Activated naive CD4-positive, alpha-beta T cell treated with anti-CD3 and anti-CD28 coated beads, Interleukin-2, amount 10 ng/mL, durations not matched to agents 7 days and 5 days (primary cell): ENCODE measurements at regions of chr9 and their contacts with region 1.

Region 1: DNA sequence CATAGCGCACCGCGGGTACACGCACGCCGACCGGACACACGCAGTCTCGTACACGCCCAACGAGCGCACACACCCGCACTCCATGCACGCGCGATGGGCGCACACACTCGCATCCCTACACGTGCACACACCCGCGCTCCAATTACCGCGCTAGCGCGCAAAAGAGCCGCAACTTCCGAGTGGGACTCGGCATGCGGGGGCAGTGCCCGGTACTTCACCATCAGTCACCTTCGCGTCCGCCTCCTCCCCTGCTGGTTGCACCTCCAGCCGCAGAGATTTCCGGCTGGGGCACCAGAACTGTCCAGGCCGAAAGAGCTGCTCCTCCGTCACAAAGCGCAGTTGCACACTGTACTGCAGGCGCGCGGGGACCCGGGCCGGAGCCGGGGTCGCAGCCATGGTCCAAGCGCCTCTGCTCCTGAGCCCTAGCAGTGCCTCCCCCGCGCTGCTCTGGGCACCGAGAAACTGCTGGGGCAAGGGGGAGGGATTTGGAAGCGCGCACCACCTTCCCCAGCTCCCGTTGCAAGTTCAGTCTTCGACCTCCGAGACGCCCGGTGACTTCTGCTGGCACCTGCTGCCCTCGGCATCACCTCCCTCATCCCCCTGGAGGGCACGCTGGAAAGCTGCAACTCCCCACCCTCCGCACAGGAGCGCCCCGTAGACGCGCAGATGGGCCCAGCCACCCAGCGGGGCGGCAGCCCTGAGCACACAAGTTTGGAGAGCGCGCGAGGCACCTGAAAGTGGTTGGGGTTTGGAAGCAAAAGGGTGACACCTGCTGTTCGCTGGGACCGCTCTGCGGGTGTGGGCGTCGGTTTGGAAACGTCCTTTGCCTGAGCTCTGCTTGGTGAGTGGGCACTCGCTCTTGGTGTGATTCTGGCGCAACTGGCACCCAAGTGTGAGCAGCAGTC is 337.4 kb upstream of the PUM3 start:
- DNase-seq: peak; percentile 62
- H3K4me3 Mint-ChIP-seq: peak overlapping the region; percentile 56
- H3K27ac Mint-ChIP-seq: no peak overlapping the region
- H3K4me1 Mint-ChIP-seq: peaks cover 2% of the 10 kb centered on the region
- H3K27me3 Mint-ChIP-seq: peaks cover 39% of the 10 kb centered on the region

Region 2: GRCh38 chr9:2857564-2858198 is 323.6 kb before region 1 on chr9:
- CTCF ChIA-PET with region 1: interaction called, 32 read pairs
- DNase-seq: peak; percentile 79
- H3K4me3 Mint-ChIP-seq: no peak overlapping the region
- H3K27ac Mint-ChIP-seq: no peak overlapping the region
- H3K4me1 Mint-ChIP-seq: no peaks in the 10 kb centered on the region
- H3K27me3 Mint-ChIP-seq: peaks cover 24% of the 10 kb centered on the region

Region 3: GRCh38 chr9:3367185-3367584 is 185.9 kb after region 1 on chr9:
- CTCF ChIA-PET with region 1: no interaction called
- DNase-seq: no peak
- H3K4me3 Mint-ChIP-seq: no peak overlapping the region
- H3K27ac Mint-ChIP-seq: no peak overlapping the region
- H3K4me1 Mint-ChIP-seq: no peaks in the 10 kb centered on the region
- H3K27me3 Mint-ChIP-seq: no peaks in the 10 kb centered on the region